CD8-positive, alpha-beta T cell (primary cell): ENCODE measurements at regions of chr6 and their contacts with region 1.

Region 1: GRCh38 chr6:148803979-148804378 is 57.1 kb downstream of the UST start:
- DNase-seq: no peak
- ATAC-seq: no peak
- H3K4me3 ChIP-seq: no peak overlapping the region
- H3K4me3 Mint-ChIP-seq: no peak overlapping the region
- H3K27ac ChIP-seq: no peak overlapping the region
- H3K27ac Mint-ChIP-seq: no peak overlapping the region
- H3K4me1 ChIP-seq: no peaks in the 10 kb centered on the region
- H3K4me1 Mint-ChIP-seq: peaks cover 2% of the 10 kb centered on the region
- H3K27me3 ChIP-seq: no peaks in the 10 kb centered on the region
- H3K27me3 Mint-ChIP-seq: no peaks in the 10 kb centered on the region
- CTCF ChIP-seq: no peak

Region 2: DNA sequence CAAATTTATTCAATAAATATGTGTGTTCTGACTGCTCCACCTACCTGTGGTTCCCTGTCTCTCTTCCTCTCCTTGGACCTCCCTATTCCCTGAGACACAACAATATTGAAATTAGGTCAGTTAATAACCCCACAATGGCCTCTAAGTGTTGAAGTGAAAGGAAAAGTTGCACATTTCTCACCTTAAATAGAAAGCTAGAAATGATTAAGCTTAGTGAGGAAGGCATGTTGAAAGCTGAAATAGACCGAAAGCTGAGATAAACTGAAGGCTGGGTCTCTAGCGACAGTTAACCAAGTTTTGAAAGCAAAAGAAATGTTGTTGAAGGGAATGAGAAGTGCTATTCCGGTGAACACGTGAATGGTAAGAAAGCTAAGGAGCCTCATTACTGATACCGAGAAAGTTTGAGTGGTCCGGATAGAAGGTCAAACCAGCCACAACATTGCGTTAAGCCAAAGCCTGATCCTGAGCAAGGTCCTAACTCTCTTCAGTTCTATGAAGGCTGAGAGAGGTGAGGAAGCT is 23.0 kb before region 1 on chr6:
- CTCF ChIA-PET with region 1: no interaction called
- POLR2A ChIA-PET with region 1: no interaction called
- intact Hi-C with region 1: loop called in 1 of 2 experiments (anchors 2 kb)
- DNase-seq: peak in 2 of 9 experiments; percentile 27 to 53
- ATAC-seq: peak; percentile 14
- H3K4me3 ChIP-seq: peak overlapping the region in 1 of 2 experiments; percentile 25
- H3K4me3 Mint-ChIP-seq: peak overlapping the region; percentile 70
- H3K27ac ChIP-seq: peak overlapping the region in 1 of 2 experiments; percentile 49
- H3K27ac Mint-ChIP-seq: peak overlapping the region; percentile 66
- H3K4me1 ChIP-seq: no peaks in the 10 kb centered on the region
- H3K4me1 Mint-ChIP-seq: peaks cover 16% of the 10 kb centered on the region
- H3K27me3 ChIP-seq: no peaks in the 10 kb centered on the region
- H3K27me3 Mint-ChIP-seq: no peaks in the 10 kb centered on the region
- CTCF ChIP-seq: no peak